Right cardiac atrium (tissue), 5 donors: ENCODE measurements at regions of chr3 and their contacts with region 1.

Region 1: GRCh38 chr3:176939022-176939817 is 258.1 kb downstream of the TBL1XR1 start:
- DNase-seq: no peak
- ATAC-seq: peak; percentile 81 to 84
- H3K4me3 ChIP-seq: no peak overlapping the region
- H3K27ac ChIP-seq: no peak overlapping the region
- H3K4me1 ChIP-seq: no peaks in the 10 kb centered on the region
- H3K27me3 ChIP-seq: no peaks in the 10 kb centered on the region

Region 2: GRCh38 chr3:176514297-176514696 is 424.9 kb before region 1 on chr3:
- intact Hi-C with region 1: loop called in 2 of 4 experiments (anchors 10 kb)
- DNase-seq: peak in 1 of 3 donors; percentile 18
- ATAC-seq: peak in 1 of 2 donors; percentile 18
- H3K4me3 ChIP-seq: no peak overlapping the region
- H3K27ac ChIP-seq: no peak overlapping the region
- H3K4me1 ChIP-seq: no peaks in the 10 kb centered on the region
- H3K27me3 ChIP-seq: no peaks in the 10 kb centered on the region

Region 3: GRCh38 chr3:176755552-176755951 is 183.7 kb before region 1 on chr3:
- intact Hi-C with region 1: no loop called
- DNase-seq: no peak
- ATAC-seq: no peak
- H3K4me3 ChIP-seq: no peak overlapping the region
- H3K27ac ChIP-seq: no peak overlapping the region
- H3K4me1 ChIP-seq: no peaks in the 10 kb centered on the region
- H3K27me3 ChIP-seq: no peaks in the 10 kb centered on the region

Region 4: DNA sequence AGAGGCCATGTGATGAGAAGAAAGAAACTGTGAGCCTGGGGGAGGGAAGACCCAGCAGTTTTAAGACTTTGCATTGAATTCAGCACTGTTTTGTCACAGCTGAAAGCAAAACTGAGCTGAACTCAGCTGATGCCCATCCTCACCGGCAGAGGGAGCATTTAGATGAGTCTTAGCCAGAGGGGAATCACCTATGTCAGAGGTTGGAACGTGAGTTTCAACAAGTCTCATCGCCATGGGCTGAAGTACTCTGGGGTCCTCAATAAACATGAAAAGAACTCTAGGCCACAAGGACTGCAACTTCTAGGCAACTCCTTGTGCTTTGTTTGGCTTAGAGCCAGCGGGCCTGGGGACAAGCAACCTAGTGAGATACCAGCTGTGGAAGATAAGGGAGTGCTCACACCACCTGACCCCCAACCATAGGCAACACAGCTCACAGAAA is 66.4 kb before region 1 on chr3:
- intact Hi-C with region 1: loop called in 2 of 4 experiments (anchors 5 to 10 kb)
- DNase-seq: peak in 2 of 3 donors; percentile 20 to 65
- ATAC-seq: peak; percentile 61 to 76
- H3K4me3 ChIP-seq: no peak overlapping the region
- H3K27ac ChIP-seq: no peak overlapping the region
- H3K4me1 ChIP-seq: peaks cover 3% of the 10 kb centered on the region
- H3K27me3 ChIP-seq: no peaks in the 10 kb centered on the region